ENCODE measurements at regions of chr11 and their contacts with region 1.

Region 1: DNA sequence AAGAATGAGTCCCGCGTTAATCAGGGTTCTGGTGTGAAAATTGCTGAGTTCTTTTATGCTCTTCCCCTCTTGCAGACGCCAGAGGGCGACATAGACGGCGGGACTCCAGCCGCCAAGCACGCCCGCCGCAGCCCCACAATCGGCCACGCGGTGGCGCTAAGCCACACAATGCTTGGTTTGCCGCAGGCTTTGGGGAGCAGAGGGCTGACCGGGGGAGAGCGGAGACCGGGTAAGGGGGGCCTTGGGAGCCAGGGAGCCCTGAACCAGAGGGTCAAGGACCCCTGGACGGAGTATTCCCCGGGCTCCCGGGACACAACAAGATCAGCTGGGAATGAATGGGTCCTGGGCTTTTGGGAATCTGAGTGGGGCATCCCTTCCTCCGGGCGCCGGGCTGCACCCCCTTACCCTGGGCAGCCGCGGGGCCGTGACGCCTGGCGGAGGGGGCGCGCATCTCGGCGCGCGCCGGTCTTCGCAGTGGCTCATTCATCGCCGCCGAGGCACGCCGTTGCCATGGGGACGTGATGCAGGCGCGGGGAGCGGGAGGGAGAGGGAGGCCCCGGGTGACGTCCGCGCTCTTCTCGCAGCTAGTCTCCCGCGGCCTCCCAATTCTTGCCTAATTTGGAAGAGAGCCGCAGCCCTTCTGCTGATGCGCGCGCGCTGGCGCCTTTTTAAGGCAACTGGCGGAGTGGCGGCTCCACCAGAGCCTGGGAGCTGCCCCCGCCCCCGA is 12.2 kb upstream of the NPAS4 start:
- DNase-seq: peak; percentile 89
- H3K4me3 Mint-ChIP-seq: peak overlapping the region; percentile 78
- H3K27ac Mint-ChIP-seq: no peak overlapping the region
- H3K4me1 Mint-ChIP-seq: peaks cover 4% of the 10 kb centered on the region
- H3K27me3 Mint-ChIP-seq: peaks cover 13% of the 10 kb centered on the region

Region 2: GRCh38 chr11:65961902-65962564 is 446.6 kb before region 1 on chr11:
- intact Hi-C with region 1: no loop called
- DNase-seq: peak; percentile 44
- H3K4me3 Mint-ChIP-seq: peak overlapping the region; percentile 96
- H3K27ac Mint-ChIP-seq: peak overlapping the region; percentile 97
- H3K4me1 Mint-ChIP-seq: peaks cover 30% of the 10 kb centered on the region
- H3K27me3 Mint-ChIP-seq: no peaks in the 10 kb centered on the region

Region 3: DNA sequence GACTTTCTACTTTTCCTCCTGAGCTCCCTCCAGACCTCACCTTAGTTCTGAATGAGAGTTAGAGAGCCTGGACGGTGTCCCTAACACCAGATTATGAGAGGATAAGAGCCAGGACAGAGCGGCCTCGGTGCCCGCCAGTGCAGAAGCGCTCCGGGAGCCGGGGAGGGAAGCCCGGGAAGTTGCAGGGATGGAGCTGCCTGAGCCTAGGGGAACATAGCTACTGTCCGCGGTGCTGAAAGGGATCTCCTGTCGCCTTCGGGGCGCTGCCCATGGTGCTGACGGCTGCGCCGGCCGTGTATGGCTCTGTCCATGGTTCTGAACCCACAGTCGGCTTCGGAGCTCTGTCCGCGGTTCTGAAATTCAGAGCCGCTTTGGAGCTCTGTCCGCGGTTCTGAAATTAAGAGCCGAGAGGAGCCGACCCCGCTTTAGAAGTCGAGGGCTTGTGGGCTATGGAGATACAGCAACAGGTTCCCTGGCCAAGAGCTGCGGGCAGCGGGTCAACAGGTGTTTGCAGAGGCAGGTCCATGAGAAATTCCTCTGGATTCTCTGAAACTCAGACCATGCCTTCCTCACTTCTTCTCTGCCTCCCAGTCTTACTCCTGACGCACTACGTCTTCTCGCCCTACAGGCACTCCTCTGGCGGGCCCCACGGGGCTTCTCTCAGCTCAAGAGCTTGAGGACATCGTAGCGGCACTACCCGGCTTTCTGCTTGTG is 13.0 kb after region 1 on chr11:
- intact Hi-C with region 1: loop called (anchors 1 kb)
- DNase-seq: peak; percentile 85
- H3K4me3 Mint-ChIP-seq: no peak overlapping the region
- H3K27ac Mint-ChIP-seq: no peak overlapping the region
- H3K4me1 Mint-ChIP-seq: peaks cover 27% of the 10 kb centered on the region
- H3K27me3 Mint-ChIP-seq: peaks cover 21% of the 10 kb centered on the region

Region 4: GRCh38 chr11:66429983-66430602 is 21.4 kb after region 1 on chr11:
- intact Hi-C with region 1: loop called (anchors 1 kb)
- DNase-seq: peak; percentile 57
- H3K4me3 Mint-ChIP-seq: no peak overlapping the region
- H3K27ac Mint-ChIP-seq: no peak overlapping the region
- H3K4me1 Mint-ChIP-seq: no peaks in the 10 kb centered on the region
- H3K27me3 Mint-ChIP-seq: no peaks in the 10 kb centered on the region

Region 5: DNA sequence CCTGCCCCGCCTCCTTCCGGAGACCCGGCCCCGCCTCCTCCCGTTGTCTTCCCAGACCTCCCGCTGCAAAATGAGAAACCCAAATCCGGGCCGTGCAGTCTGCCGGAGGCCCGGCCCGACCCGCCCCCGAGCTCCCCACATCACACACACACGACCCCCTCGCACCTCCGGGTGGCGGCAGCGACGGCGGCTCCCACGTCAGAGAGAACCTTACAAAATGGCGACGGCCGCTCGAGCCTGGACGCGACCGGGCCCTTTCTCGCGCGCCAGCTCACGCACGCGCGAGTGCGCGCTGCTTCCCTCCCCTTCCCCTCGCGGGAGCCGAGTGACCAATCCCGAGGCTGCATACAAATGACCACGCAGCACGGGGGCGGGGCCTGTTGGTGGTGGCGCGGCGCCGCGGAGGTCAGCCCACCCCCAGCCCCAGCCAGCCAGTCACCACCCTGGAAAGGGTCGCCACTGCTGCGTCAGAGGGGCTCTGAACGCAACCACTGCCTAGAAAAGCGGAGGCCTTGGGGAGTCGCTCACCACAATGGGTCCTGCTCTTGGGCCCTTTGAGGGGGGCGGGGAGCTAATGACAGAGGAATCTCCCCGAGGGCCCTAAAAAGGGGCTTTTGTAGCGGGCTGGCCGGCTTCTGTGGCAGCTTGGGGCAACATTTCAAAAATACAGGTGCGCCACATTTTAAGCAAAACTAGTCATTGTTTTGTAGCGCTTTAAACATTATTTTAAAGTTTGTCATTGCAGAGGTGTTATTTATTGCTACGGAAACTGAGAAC is 269.1 kb after region 1 on chr11 and contains the start of gene RBM4B:
- intact Hi-C with region 1: loop called (anchors 1 kb)
- DNase-seq: peak; percentile 92
- H3K4me3 Mint-ChIP-seq: peak within 1 kb of the TSS; percentile 92
- H3K27ac Mint-ChIP-seq: peak within 1 kb of the TSS; percentile 97
- H3K4me1 Mint-ChIP-seq: peaks cover 30% of the 10 kb centered on the region
- H3K27me3 Mint-ChIP-seq: no peaks in the 10 kb centered on the region
- total RNA-seq, gene RBM4B: 16.5 and 18.4 TPM in 2 replicates